Transverse colon (tissue), 4 donors: ENCODE measurements at regions of chr1 and their contacts with region 1.

Region 1: DNA sequence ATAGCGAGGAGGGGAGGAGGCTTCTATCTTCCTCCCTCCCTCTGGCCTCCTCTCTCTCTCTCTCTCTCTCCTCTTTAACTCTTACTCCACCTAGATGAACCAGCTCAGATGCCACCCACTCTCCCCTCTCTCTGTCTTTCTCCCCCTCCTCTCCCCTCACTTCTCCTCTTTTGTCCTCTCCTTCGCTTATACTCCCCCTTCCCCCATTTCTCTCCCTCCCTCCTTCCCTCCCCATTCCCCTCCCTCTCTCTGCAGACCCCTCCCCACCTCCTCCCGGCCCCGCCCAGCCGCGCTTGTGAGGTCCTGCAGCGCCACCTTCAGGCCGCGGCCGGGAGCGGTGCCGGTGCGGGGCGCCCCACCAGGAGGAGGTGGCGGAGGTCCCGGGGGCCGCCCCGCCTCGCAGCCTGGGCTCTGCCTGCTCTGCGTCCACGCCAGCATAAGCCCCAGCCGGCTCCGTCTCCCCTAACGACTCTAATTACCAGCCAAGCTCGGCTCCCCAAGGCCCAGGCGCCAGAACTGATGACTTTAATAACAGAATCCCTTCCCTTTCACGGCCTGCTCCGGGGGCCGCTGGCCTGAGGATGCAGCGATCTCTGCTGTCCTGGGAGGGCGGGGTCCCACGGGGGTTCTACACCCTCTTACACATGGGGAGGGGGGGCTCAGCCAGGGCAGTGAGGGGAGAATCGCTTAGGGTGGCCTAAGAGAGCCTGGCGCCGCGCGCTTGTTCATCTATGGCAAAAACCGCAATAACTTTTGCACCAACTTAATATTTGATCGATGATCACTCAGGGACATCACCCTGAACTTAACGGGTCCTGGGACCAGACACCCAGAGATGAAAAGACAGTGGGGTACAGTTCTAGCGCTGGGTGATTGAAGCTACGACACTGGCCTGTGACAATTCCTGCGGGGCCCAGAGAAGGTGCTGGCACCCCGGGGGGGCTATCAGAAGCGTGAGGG is 637.3 kb downstream of the MATN1 start:
- DNase-seq: peak; percentile 41
- H3K4me3 ChIP-seq: no peak overlapping the region
- H3K27ac ChIP-seq: no peak overlapping the region
- H3K4me1 ChIP-seq: peaks cover 11 to 41% (median 19%) of the 10 kb centered on the region in 4 donors
- H3K27me3 ChIP-seq: no peaks in the 10 kb centered on the region
- CTCF ChIP-seq: peak; percentile 59 to 78 (median 73)
- EP300 ChIP-seq: no peak
- POLR2A ChIP-seq: no peak

Region 2: GRCh38 chr1:29271724-29272123 is 814.4 kb before region 1 on chr1:
- in situ Hi-C with region 1: loop called in 1 of 4 experiments (anchors 25 kb)
- intact Hi-C with region 1: no loop called
- DNase-seq: peak; percentile 84
- H3K4me3 ChIP-seq: no peak overlapping the region
- H3K27ac ChIP-seq: peak overlapping the region in 3 of 4 donors; percentile 33 to 47 (median 38)
- H3K4me1 ChIP-seq: peaks cover 10 to 26% (median 16%) of the 10 kb centered on the region in 4 donors
- H3K27me3 ChIP-seq: no peaks in the 10 kb centered on the region
- CTCF ChIP-seq: no peak
- EP300 ChIP-seq: no peak
- POLR2A ChIP-seq: no peak

Region 3: GRCh38 chr1:30286241-30286987 is 200.3 kb after region 1 on chr1:
- in situ Hi-C with region 1: no loop called
- intact Hi-C with region 1: no loop called
- DNase-seq: no peak
- H3K4me3 ChIP-seq: no peak overlapping the region
- H3K27ac ChIP-seq: no peak overlapping the region
- H3K4me1 ChIP-seq: no peaks in the 10 kb centered on the region
- H3K27me3 ChIP-seq: peaks cover 6% of the 10 kb centered on the region
- CTCF ChIP-seq: no peak
- EP300 ChIP-seq: no peak
- POLR2A ChIP-seq: no peak